Caco-2 (cell line): ENCODE measurements at regions of chr6 and their contacts with region 1.

Region 1: DNA sequence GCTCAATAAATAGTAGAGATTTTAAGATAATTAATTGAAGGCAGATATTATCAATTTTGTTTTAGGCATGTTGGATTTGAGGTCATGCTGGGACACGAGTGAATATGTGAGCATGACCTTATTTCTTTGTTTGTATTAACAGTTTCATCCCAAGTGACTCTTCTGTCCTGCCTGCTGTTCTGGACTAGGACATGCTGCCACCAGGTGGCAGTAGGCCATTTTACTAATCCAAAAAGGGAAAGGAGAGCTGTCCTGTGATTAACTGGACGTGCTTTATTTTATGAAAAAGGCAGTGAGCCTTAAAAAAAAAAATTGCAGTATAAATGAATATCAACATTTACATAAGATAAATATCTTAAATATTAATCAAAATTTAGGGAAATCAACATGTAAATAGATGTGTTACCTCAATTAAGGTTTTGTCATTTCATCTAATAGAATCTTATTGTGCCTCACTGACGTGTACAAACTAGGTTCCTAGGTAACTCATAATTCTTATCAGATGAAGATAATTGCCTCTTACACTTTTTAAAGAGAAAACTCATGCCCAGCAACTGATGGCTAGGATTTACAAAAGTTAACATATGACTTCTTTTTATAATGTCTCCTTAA is 49.8 kb downstream of the FRK start:
- DNase-seq: peak; percentile 58 to 69
- H3K4me3 ChIP-seq: no peak overlapping the region
- H3K4me3 Mint-ChIP-seq: no peak overlapping the region
- H3K27ac Mint-ChIP-seq: no peak overlapping the region
- H3K4me1 ChIP-seq: peaks cover 4% of the 10 kb centered on the region
- H3K4me1 Mint-ChIP-seq: peaks cover 10% of the 10 kb centered on the region
- H3K27me3 ChIP-seq: no peaks in the 10 kb centered on the region
- H3K27me3 Mint-ChIP-seq: no peaks in the 10 kb centered on the region
- CTCF ChIP-seq: peak; percentile 78 to 87

Region 2: GRCh38 chr6:116253505-116254296 is 242.8 kb after region 1 on chr6 and contains the start of gene TSPYL4:
- CTCF ChIA-PET with region 1: no interaction called
- POLR2A ChIA-PET with region 1: no interaction called
- intact Hi-C with region 1: loop called (anchors 10 kb)
- DNase-seq: peak; percentile 92
- H3K4me3 ChIP-seq: peak within 1 kb of the TSS; percentile 99
- H3K4me3 Mint-ChIP-seq: no peak within 1 kb of the TSS
- H3K27ac Mint-ChIP-seq: no peak within 1 kb of the TSS
- H3K4me1 ChIP-seq: peaks cover 19% of the 10 kb centered on the region
- H3K4me1 Mint-ChIP-seq: peaks cover 16% of the 10 kb centered on the region
- H3K27me3 ChIP-seq: no peaks in the 10 kb centered on the region
- H3K27me3 Mint-ChIP-seq: no peaks in the 10 kb centered on the region
- CTCF ChIP-seq: no peak
- total RNA-seq, gene TSPYL4: 10.7 and 10.9 TPM in 2 replicates

Region 3: GRCh38 chr6:116279260-116280063 is 268.6 kb after region 1 on chr6 and contains the start of gene TSPYL1:
- CTCF ChIA-PET with region 1: no interaction called
- POLR2A ChIA-PET with region 1: no interaction called
- intact Hi-C with region 1: no loop called
- DNase-seq: peak; percentile 94
- H3K4me3 ChIP-seq: peak within 1 kb of the TSS; percentile 58
- H3K4me3 Mint-ChIP-seq: peak within 1 kb of the TSS; percentile 90
- H3K27ac Mint-ChIP-seq: peak within 1 kb of the TSS; percentile 87
- H3K4me1 ChIP-seq: peaks cover 18% of the 10 kb centered on the region
- H3K4me1 Mint-ChIP-seq: peaks cover 24% of the 10 kb centered on the region
- H3K27me3 ChIP-seq: no peaks in the 10 kb centered on the region
- H3K27me3 Mint-ChIP-seq: no peaks in the 10 kb centered on the region
- CTCF ChIP-seq: no peak
- total RNA-seq, gene TSPYL1: 55.0 and 57.3 TPM in 2 replicates